ENCODE measurements at regions of chr6 and their contacts with region 1.

Region 1: GRCh38 chr6:32971581-32972352 is 3.4 kb downstream of the BRD2 start:
- DNase-seq: peak; percentile 98 to 99
- H3K4me3 ChIP-seq: peak overlapping the region; percentile 90 to 99 (median 98)
- H3K27ac ChIP-seq: peak overlapping the region; percentile 99
- H3K4me1 ChIP-seq: peaks cover 0 to 14% (median 7%) of the 10 kb centered on the region in 4 experiments; a peak in 5 of 7 replicates
- H3K27me3 ChIP-seq: no peaks in the 10 kb centered on the region
- CTCF ChIP-seq: no peak; a peak in 1 of 4 replicates
- EP300 ChIP-seq: no peak; a peak in 1 of 3 replicates
- POLR2A ChIP-seq: peak in 1 of 2 experiments; percentile 99; a peak in 2 of 3 replicates
- RAD21 ChIP-seq: no peak

Region 2: GRCh38 chr6:32491700-32492099 is 480.1 kb before region 1 on chr6:
- CTCF ChIA-PET with region 1: no interaction called
- POLR2A ChIA-PET with region 1: no interaction called
- DNase-seq: no peak
- H3K4me3 ChIP-seq: no peak overlapping the region
- H3K27ac ChIP-seq: no peak overlapping the region
- H3K4me1 ChIP-seq: no peaks in the 10 kb centered on the region
- H3K27me3 ChIP-seq: no peaks in the 10 kb centered on the region
- CTCF ChIP-seq: no peak
- EP300 ChIP-seq: no peak
- POLR2A ChIP-seq: no peak
- RAD21 ChIP-seq: no peak

Region 3: GRCh38 chr6:32853541-32854375 is 118.0 kb before region 1 on chr6 and contains the starts of genes PSMB9 and TAP1:
- CTCF ChIA-PET with region 1: interaction called, 3 read pairs
- POLR2A ChIA-PET with region 1: interaction called, 49 read pairs
- DNase-seq: peak; percentile 80 to 91
- H3K4me3 ChIP-seq: peak within 1 kb of the TSS; percentile 59 to 77 (median 76)
- H3K27ac ChIP-seq: no peak within 1 kb of the TSS; the same call in 1 of the 2 replicates
- H3K4me1 ChIP-seq: peaks cover 0 to 4% (median 1%) of the 10 kb centered on the region in 4 experiments; a peak in 4 of 7 replicates
- H3K27me3 ChIP-seq: peaks cover 6 to 41% (median 36%) of the 10 kb centered on the region in 4 experiments
- CTCF ChIP-seq: peak; percentile 63 to 94 (median 75)
- EP300 ChIP-seq: peak; percentile 16 to 33; a peak in 2 of 3 replicates
- POLR2A ChIP-seq: peak in 1 of 2 experiments; percentile 42; a peak in 2 of 3 replicates
- RAD21 ChIP-seq: peak; percentile 56 to 69
- total RNA-seq, gene PSMB9: 2.9 and 4.5 TPM in 2 replicates
- total RNA-seq, gene TAP1: 16.8 TPM in 2 replicates

Region 4: DNA sequence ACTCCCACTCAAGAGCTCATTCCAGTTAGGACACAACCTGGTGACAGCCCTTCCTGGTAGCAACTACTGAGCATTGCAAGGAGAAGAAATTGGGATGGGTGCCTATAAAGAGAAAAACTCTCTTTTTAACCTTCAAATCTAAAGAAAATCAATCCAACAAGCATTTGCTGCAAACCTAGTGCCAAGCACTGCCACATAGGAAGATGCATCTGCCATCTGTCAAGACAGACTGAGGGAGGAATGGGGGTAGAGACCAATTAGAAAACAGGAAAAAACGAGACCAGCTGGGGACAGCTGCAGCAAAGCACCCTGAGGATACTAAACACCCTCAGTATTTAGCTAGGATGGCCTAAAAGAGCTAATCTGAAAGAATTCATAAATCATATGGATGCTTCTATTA is 58.8 kb before region 1 on chr6:
- CTCF ChIA-PET with region 1: interaction called, 5 read pairs
- POLR2A ChIA-PET with region 1: interaction called, 11 read pairs
- DNase-seq: no peak
- H3K4me3 ChIP-seq: no peak overlapping the region
- H3K27ac ChIP-seq: no peak overlapping the region
- H3K4me1 ChIP-seq: no peaks in the 10 kb centered on the region
- H3K27me3 ChIP-seq: peaks cover 0 to 1% (median 0%) of the 10 kb centered on the region in 4 experiments; a peak in 1 of 7 replicates
- CTCF ChIP-seq: no peak
- EP300 ChIP-seq: no peak
- POLR2A ChIP-seq: no peak
- RAD21 ChIP-seq: no peak

Region 5: GRCh38 chr6:32952817-32953739 is 18.7 kb before region 1 on chr6 and contains the start of gene HLA-DMA:
- CTCF ChIA-PET with region 1: interaction called, 168 read pairs
- POLR2A ChIA-PET with region 1: interaction called, 1,158 read pairs
- DNase-seq: peak; percentile 82 to 88
- H3K4me3 ChIP-seq: no peak within 1 kb of the TSS
- H3K27ac ChIP-seq: no peak within 1 kb of the TSS
- H3K4me1 ChIP-seq: peaks cover 0 to 13% (median 3%) of the 10 kb centered on the region in 4 experiments; a peak in 5 of 7 replicates
- H3K27me3 ChIP-seq: no peaks in the 10 kb centered on the region; a peak in 1 of 7 replicates
- CTCF ChIP-seq: peak; percentile 81 to 93 (median 82)
- EP300 ChIP-seq: no peak
- POLR2A ChIP-seq: no peak
- RAD21 ChIP-seq: peak; percentile 38 to 59
- total RNA-seq, gene HLA-DMA: 13.3 and 15.1 TPM in 2 replicates

Region 6: DNA sequence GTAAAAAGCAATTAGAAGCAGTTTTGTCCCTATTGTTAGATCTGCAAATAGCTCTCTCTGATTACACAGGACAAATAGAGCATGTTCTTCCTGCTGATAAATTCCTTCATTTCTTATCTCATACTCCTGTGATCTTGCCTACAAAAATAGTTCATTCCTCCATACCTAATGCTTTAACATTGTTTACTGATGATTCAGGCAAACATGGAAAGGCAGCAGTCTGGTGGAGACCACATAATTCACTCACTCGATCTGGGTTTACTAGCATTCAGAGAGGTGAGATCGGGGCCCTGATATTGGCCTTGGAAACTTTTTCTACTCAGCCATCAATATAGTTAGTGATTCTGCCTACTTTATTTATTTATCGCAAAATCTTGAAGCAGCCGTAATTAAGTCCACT is 81.5 kb after region 1 on chr6:
- CTCF ChIA-PET with region 1: no interaction called
- POLR2A ChIA-PET with region 1: no interaction called
- DNase-seq: no peak
- H3K4me3 ChIP-seq: no peak overlapping the region
- H3K27ac ChIP-seq: no peak overlapping the region
- H3K4me1 ChIP-seq: peaks cover 6 to 8% (median 6%) of the 10 kb centered on the region in 4 experiments; a peak in 4 of 7 replicates
- H3K27me3 ChIP-seq: no peaks in the 10 kb centered on the region
- CTCF ChIP-seq: no peak
- EP300 ChIP-seq: no peak
- POLR2A ChIP-seq: no peak
- RAD21 ChIP-seq: no peak

Region 7: GRCh38 chr6:33082702-33083101 is 110.9 kb after region 1 on chr6:
- CTCF ChIA-PET with region 1: interaction called, 9 read pairs
- POLR2A ChIA-PET with region 1: interaction called, 35 read pairs
- DNase-seq: peak in 1 of 2 experiments; percentile 65
- H3K4me3 ChIP-seq: no peak overlapping the region
- H3K27ac ChIP-seq: no peak overlapping the region
- H3K4me1 ChIP-seq: peaks cover 2 to 8% (median 5%) of the 10 kb centered on the region in 4 experiments; a peak in 6 of 7 replicates
- H3K27me3 ChIP-seq: peaks cover 0 to 8% (median 3%) of the 10 kb centered on the region in 4 experiments; a peak in 4 of 7 replicates
- CTCF ChIP-seq: peak; percentile 81 to 86 (median 84)
- EP300 ChIP-seq: no peak
- POLR2A ChIP-seq: no peak
- RAD21 ChIP-seq: peak; percentile 74 to 82

Region 8: DNA sequence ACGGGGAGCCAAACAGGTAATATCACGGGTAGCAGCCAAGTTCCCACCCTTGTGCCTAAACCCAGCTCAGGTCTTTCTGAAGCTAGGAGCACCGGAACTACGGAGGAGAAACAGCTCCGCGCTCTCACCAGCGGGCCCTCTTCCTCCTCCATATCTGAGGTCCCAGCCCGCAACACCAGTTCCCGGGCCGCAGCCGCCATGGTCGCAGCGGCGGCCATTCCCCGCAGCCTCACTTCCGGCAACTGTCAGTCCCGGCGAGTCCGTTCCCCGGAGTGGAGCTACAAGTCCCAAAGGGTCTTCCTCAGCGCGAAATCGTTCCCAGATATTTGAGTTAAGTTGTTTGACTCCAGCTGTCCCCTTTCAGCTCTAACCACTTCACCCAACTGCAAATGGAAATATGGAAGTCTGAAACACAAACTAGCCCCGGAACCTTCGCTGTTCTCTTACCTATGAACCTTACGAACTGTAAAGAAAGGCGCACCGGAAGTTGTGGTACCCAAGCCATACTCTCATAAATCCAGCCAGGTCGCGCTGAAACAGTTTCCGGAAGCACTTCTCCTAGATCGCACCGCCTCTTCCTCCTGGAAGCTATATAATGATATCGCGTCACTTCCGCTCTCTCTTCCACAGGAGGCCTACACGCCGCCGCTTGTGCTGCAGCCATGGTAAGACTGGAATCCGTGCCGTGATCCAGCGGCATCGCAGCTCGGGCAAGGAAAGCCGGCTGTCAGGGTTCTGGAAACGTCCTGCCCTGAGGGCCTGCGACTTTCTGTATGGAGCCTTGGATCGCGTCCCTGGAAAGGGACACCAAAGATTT is 299.9 kb after region 1 on chr6 and contains the starts of genes RPS18 and VPS52:
- CTCF ChIA-PET with region 1: no interaction called
- POLR2A ChIA-PET with region 1: interaction called, 35 read pairs
- DNase-seq: peak; percentile 88
- H3K4me3 ChIP-seq: peak within 1 kb of the TSS; percentile 81 to 100 (median 100)
- H3K27ac ChIP-seq: peak within 1 kb of the TSS; percentile 98
- H3K4me1 ChIP-seq: peaks cover 0 to 22% (median 8%) of the 10 kb centered on the region in 4 experiments; a peak in 6 of 7 replicates
- H3K27me3 ChIP-seq: no peaks in the 10 kb centered on the region
- CTCF ChIP-seq: no peak
- EP300 ChIP-seq: no peak
- POLR2A ChIP-seq: peak in 1 of 2 experiments; percentile 98; a peak in 2 of 3 replicates
- RAD21 ChIP-seq: no peak
- total RNA-seq, gene RPS18: 2,791 and 2,796 TPM in 2 replicates
- total RNA-seq, gene VPS52: 35.0 and 36.5 TPM in 2 replicates

Measured in H1 (cell line).